ENCODE measurements at regions of chr15 and their contacts with region 1.

Region 1: GRCh38 chr15:62649793-62650420 is 392.6 kb upstream of the TPM1 start:
- DNase-seq: no peak
- ATAC-seq: no peak
- H3K4me3 ChIP-seq: no peak overlapping the region
- H3K27ac ChIP-seq: no peak overlapping the region
- H3K4me1 ChIP-seq: peaks cover 17% of the 10 kb centered on the region
- H3K27me3 ChIP-seq: no peaks in the 10 kb centered on the region
- CTCF ChIP-seq: no peak

Region 2: DNA sequence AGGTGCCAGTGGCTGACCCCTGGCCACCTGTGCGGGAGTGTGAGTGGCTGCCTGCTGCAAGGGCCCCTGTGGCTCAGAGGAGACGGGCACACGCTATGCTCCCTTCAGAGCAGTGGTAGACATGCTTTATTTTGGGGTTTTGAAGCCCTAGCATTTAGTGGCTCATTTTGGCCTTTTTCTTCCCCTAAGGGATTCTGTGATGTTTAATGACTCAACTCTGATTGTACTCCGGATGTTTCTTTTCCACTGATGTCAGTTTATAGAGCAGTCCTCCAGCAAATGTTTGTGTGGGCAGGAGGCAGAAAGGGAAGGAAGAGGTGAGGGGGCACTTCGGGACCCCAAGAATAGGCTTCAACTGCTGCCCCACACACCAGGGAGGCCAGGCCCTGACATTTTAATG is 195.9 kb before region 1 on chr15:
- CTCF ChIA-PET with region 1: no interaction called
- POLR2A ChIA-PET with region 1: no interaction called
- intact Hi-C with region 1: loop called (anchors 10 kb)
- DNase-seq: peak; percentile 71
- ATAC-seq: peak; percentile 62
- H3K4me3 ChIP-seq: peak overlapping the region; percentile 53
- H3K27ac ChIP-seq: peak overlapping the region; percentile 82
- H3K4me1 ChIP-seq: peaks cover 38% of the 10 kb centered on the region
- H3K27me3 ChIP-seq: no peaks in the 10 kb centered on the region
- CTCF ChIP-seq: no peak

Region 3: GRCh38 chr15:62558640-62559380 is 91.1 kb before region 1 on chr15:
- CTCF ChIA-PET with region 1: no interaction called
- POLR2A ChIA-PET with region 1: no interaction called
- intact Hi-C with region 1: loop called (anchors 10 kb)
- DNase-seq: no peak
- ATAC-seq: no peak
- H3K4me3 ChIP-seq: no peak overlapping the region
- H3K27ac ChIP-seq: no peak overlapping the region
- H3K4me1 ChIP-seq: no peaks in the 10 kb centered on the region
- H3K27me3 ChIP-seq: no peaks in the 10 kb centered on the region
- CTCF ChIP-seq: no peak

Region 4: GRCh38 chr15:62606376-62607113 is 43.4 kb before region 1 on chr15:
- CTCF ChIA-PET with region 1: no interaction called
- POLR2A ChIA-PET with region 1: no interaction called
- intact Hi-C with region 1: loop called (anchors 2 kb)
- DNase-seq: peak; percentile 94
- ATAC-seq: peak; percentile 89
- H3K4me3 ChIP-seq: no peak overlapping the region
- H3K27ac ChIP-seq: peak overlapping the region; percentile 62
- H3K4me1 ChIP-seq: peaks cover 52% of the 10 kb centered on the region
- H3K27me3 ChIP-seq: no peaks in the 10 kb centered on the region
- CTCF ChIP-seq: no peak

Measured in PC-3 (cell line).